Transverse colon (tissue), 4 donors: ENCODE measurements at regions of chr7 and their contacts with region 1.

Region 1: GRCh38 chr7:121994625-121995410 is 121.9 kb downstream of the PTPRZ1 start:
- DNase-seq: peak; percentile 50
- H3K4me3 ChIP-seq: no peak overlapping the region
- H3K27ac ChIP-seq: no peak overlapping the region
- H3K4me1 ChIP-seq: no peaks in the 10 kb centered on the region
- H3K27me3 ChIP-seq: no peaks in the 10 kb centered on the region
- CTCF ChIP-seq: peak; percentile 46 to 62 (median 55)
- EP300 ChIP-seq: no peak
- POLR2A ChIP-seq: no peak

Region 2: GRCh38 chr7:121366852-121367431 is 627.9 kb before region 1 on chr7:
- in situ Hi-C with region 1: loop called in 3 of 4 experiments (anchors 25 kb)
- intact Hi-C with region 1: no loop called
- DNase-seq: no peak
- H3K4me3 ChIP-seq: no peak overlapping the region
- H3K27ac ChIP-seq: no peak overlapping the region
- H3K4me1 ChIP-seq: peaks cover 0 to 18% (median 5%) of the 10 kb centered on the region in 4 donors
- H3K27me3 ChIP-seq: no peaks in the 10 kb centered on the region
- CTCF ChIP-seq: peak; percentile 72 to 85 (median 78)
- EP300 ChIP-seq: no peak
- POLR2A ChIP-seq: no peak

Region 3: DNA sequence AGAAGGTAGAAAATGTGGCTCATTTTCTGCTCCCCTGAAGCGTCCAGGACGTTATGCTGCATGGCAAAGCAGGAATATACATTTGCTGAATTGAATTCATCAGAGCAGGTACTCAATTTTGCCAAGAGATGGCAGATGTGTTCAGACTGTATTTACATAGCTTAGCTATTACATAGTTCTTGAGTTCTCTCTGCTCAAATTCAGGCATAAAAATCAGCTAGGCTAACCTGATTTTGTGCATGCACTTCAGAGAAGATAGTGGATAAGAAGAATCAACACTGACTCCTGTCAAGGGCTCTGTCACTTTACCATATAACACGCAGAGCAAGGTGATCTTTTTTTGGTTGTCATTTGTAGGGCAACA is 389.5 kb before region 1 on chr7:
- in situ Hi-C with region 1: loop called in 3 of 4 experiments (anchors 10 to 25 kb)
- intact Hi-C with region 1: no loop called
- DNase-seq: no peak
- H3K4me3 ChIP-seq: no peak overlapping the region
- H3K27ac ChIP-seq: no peak overlapping the region
- H3K4me1 ChIP-seq: peaks cover 0 to 9% (median 0%) of the 10 kb centered on the region in 4 donors
- H3K27me3 ChIP-seq: no peaks in the 10 kb centered on the region
- CTCF ChIP-seq: peak in 3 of 5 experiments; percentile 14 to 24 (median 22)
- EP300 ChIP-seq: no peak
- POLR2A ChIP-seq: no peak